ENCODE measurements at regions of chrX and their contacts with region 1.

Region 1: GRCh38 chrX:18490806-18491555 is 65.6 kb downstream of the CDKL5 start:
- DNase-seq: no peak
- H3K4me3 ChIP-seq: no peak overlapping the region
- H3K27ac ChIP-seq: no peak overlapping the region
- H3K27me3 ChIP-seq: peaks cover 0 to 31% (median 0%) of the 10 kb centered on the region in 45 donors
- CTCF ChIP-seq: no peak

Region 2: GRCh38 chrX:18210470-18210869 is 280.5 kb before region 1 on chrX:
- intact Hi-C with region 1: no loop called
- DNase-seq: no peak
- H3K4me3 ChIP-seq: no peak overlapping the region
- H3K27ac ChIP-seq: no peak overlapping the region
- H3K27me3 ChIP-seq: peaks cover 0 to 48% (median 8%) of the 10 kb centered on the region in 45 donors
- CTCF ChIP-seq: peak in 47 of 56 donors; percentile 13 to 67 (median 42)

Region 3: DNA sequence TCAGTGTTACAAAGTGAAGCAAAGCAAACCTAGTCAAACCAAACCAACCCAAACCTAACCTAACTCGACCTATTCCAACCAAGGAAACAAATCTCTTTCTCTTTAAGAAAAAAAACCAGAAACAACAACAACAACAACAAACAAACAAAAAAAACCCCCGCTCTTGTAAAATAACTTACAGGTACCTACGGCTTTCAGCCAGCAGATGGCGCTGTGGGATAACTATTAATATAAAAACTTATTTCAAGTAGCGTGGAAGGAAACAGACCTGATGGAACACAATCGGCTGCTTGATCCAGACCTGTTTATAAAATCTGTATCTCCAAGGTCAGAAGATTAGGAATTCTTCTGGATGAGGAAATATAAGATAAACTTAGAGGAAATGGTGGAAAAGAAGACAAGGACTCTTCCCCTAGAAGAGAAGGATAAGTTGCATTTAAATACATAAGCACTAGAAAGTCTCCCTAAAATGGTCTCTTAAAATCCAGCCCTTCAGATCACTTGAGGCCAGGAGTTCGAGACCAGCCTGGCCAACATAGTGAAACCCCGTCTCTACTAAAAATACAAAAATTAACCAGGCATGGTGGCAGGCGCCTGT is 99.9 kb before region 1 on chrX:
- intact Hi-C with region 1: no loop called
- DNase-seq: peak in 7 of 10 donors; percentile 42 to 86 (median 56)
- H3K4me3 ChIP-seq: no peak overlapping the region
- H3K27ac ChIP-seq: no peak overlapping the region
- H3K27me3 ChIP-seq: peaks cover 0 to 64% (median 10%) of the 10 kb centered on the region in 45 donors
- CTCF ChIP-seq: peak; percentile 52 to 94 (median 85)

Region 4: GRCh38 chrX:18448416-18448815 is 42.6 kb before region 1 on chrX:
- intact Hi-C with region 1: loop called in 1 of 2 experiments (anchors 10 kb)
- DNase-seq: no peak
- H3K4me3 ChIP-seq: no peak overlapping the region
- H3K27ac ChIP-seq: no peak overlapping the region
- H3K27me3 ChIP-seq: peaks cover 0 to 36% (median 0%) of the 10 kb centered on the region in 45 donors
- CTCF ChIP-seq: no peak